Activated T-helper 1 cell treated with anti-CD3 and anti-CD28 coated beads, Interleukin-12 subunit alpha, Interleukin-12 subunit beta, Interleukin-2, Interleukin-4 antibody, amounts not matched to agents 30 ng/mL and 10 ng/mL and 1 ng/mL, durations not matched to agents 14 hours and 24 hours and 36 hours (primary cell): ENCODE measurements at regions of chr3 and their contacts with region 1.

Region 1: DNA sequence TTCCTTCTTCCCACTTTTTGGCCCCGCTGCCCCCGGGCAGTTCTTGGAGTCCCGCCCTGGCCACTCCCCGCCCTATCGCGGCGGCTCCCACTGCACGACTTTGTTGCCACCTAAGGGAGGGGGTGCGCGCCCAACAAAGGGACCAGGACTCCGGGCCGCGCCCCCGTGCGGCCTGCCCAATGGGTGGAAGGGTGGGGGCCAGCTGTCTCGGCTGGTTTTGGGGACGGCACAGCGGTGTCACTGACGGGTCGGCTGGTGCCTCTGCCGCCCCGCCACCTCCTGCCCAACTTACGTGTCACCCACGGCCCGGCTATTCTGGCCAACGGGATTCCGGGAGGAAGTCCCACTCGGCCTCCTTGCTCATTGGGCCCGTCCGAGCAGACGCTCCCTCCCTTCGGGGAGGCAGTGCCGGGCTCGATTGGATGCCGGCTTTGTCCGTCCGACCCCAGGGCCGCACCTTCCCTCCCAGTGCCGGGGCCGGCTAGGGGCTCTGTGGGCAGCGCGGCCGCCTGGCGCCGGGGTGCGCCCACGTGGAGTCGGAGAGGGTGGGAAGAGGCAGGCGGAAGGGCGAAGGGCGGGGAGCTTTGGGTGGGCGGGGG is at the start of gene GOLIM4:
- DNase-seq: peak; percentile 42
- H3K4me3 Mint-ChIP-seq: peak within 1 kb of the TSS; percentile 90
- H3K27ac Mint-ChIP-seq: peak within 1 kb of the TSS; percentile 93
- H3K4me1 Mint-ChIP-seq: peaks cover 27% of the 10 kb centered on the region
- H3K27me3 Mint-ChIP-seq: peaks cover 35% of the 10 kb centered on the region
- total RNA-seq, gene GOLIM4: 8.4 and 8.8 TPM in 2 replicates

Region 2: GRCh38 chr3:167691366-167691765 is 404.3 kb before region 1 on chr3:
- intact Hi-C with region 1: loop called (anchors 5 kb)
- DNase-seq: peak; percentile 22
- H3K4me3 Mint-ChIP-seq: peak overlapping the region; percentile 0
- H3K27ac Mint-ChIP-seq: peak overlapping the region; percentile 5
- H3K4me1 Mint-ChIP-seq: peaks cover 27% of the 10 kb centered on the region
- H3K27me3 Mint-ChIP-seq: no peaks in the 10 kb centered on the region

Region 3: GRCh38 chr3:167929968-167930367 is 165.7 kb before region 1 on chr3:
- intact Hi-C with region 1: no loop called
- DNase-seq: no peak
- H3K4me3 Mint-ChIP-seq: no peak overlapping the region
- H3K27ac Mint-ChIP-seq: no peak overlapping the region
- H3K4me1 Mint-ChIP-seq: no peaks in the 10 kb centered on the region
- H3K27me3 Mint-ChIP-seq: no peaks in the 10 kb centered on the region

Region 4: DNA sequence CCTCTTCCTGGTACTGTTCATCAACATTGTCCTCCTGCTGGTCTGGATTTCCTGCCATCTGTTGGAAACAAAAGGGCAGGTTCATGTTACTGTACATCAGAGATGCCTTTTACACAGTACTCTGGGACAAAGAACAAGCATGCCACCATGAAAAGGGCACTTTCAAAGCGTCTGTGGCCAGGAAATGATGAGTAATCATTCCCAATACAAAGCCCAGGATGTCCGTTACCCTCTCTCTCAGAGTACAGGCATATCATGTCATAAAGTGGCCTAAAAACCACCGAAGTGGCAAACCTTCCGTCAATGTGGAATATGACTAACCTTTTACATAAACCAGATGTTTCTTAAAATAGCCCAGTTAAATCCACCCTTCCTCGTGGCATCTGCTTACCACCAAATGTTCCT is 71.2 kb before region 1 on chr3:
- intact Hi-C with region 1: loop called (anchors 1 kb)
- DNase-seq: peak; percentile 26
- H3K4me3 Mint-ChIP-seq: peak overlapping the region; percentile 12
- H3K27ac Mint-ChIP-seq: peak overlapping the region; percentile 71
- H3K4me1 Mint-ChIP-seq: peaks cover 50% of the 10 kb centered on the region
- H3K27me3 Mint-ChIP-seq: no peaks in the 10 kb centered on the region

Region 5: GRCh38 chr3:168061332-168061996 is 34.2 kb before region 1 on chr3:
- intact Hi-C with region 1: loop called (anchors 5 kb)
- DNase-seq: no peak
- H3K4me3 Mint-ChIP-seq: no peak overlapping the region
- H3K27ac Mint-ChIP-seq: no peak overlapping the region
- H3K4me1 Mint-ChIP-seq: peaks cover 9% of the 10 kb centered on the region
- H3K27me3 Mint-ChIP-seq: peaks cover 6% of the 10 kb centered on the region

Region 6: GRCh38 chr3:169668957-169669681 is 1573.4 kb after region 1 on chr3:
- intact Hi-C with region 1: loop called (anchors 10 kb)
- DNase-seq: no peak
- H3K4me3 Mint-ChIP-seq: peak overlapping the region; percentile 25
- H3K27ac Mint-ChIP-seq: no peak overlapping the region
- H3K4me1 Mint-ChIP-seq: peaks cover 27% of the 10 kb centered on the region
- H3K27me3 Mint-ChIP-seq: peaks cover 87% of the 10 kb centered on the region

Region 7: GRCh38 chr3:169863458-169863899 is 1767.8 kb after region 1 on chr3:
- intact Hi-C with region 1: no loop called
- DNase-seq: peak; percentile 44
- H3K4me3 Mint-ChIP-seq: no peak overlapping the region
- H3K27ac Mint-ChIP-seq: no peak overlapping the region
- H3K4me1 Mint-ChIP-seq: peaks cover 24% of the 10 kb centered on the region
- H3K27me3 Mint-ChIP-seq: peaks cover 25% of the 10 kb centered on the region